GM10248 (cell line): ENCODE measurements at regions of chr22 and their contacts with region 1.

Region 1: GRCh38 chr22:37676736-37677492 is 1.5 kb downstream of the LGALS1 start:
- DNase-seq: peak; percentile 89
- CTCF ChIP-seq: no peak

Region 2: DNA sequence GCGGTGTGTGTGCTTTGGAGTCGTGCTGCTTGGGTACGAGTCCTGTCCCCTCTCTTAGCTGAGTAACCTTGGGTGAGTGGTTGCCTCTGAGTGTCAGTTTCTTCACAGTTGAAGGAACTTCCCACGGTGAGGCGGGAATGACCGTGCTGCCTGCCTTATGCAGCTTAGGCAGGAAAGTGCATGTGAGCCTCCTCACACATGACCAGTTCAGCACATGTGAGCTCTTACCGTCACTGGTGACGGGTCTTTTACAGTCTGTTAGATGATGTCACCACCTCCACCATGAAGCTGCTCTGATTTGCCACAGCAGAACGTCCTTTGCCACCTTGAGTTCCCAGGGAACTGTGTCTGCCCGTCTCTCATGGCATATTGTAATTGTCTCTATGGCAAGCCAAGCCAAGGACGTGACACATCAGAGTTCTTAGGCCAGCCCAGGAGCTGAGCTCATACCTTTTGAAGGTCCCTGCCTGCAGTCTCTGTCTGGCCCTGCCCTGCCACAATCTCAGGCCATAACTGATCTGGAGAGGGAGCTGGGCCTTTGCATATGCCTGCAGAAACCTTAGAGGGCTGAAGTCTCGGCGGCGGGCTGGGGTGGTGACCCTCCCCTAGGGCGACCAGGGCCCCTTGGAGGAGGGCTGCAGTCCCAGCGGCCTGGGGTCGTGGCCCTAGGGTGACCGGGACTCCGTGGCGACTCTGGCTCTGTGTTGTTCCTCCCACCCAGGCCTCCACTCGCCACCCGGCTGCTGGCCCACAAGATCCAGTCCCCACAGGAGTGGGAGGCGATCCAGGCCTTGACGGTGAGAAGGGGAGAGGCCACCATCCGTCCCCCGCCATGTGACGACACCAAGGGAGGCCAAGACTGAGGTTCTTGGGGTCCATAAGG is 60.5 kb before region 1 on chr22:
- CTCF ChIA-PET with region 1: interaction called, 22 read pairs
- POLR2A ChIA-PET with region 1: no interaction called
- DNase-seq: no peak
- CTCF ChIP-seq: no peak

Region 3: DNA sequence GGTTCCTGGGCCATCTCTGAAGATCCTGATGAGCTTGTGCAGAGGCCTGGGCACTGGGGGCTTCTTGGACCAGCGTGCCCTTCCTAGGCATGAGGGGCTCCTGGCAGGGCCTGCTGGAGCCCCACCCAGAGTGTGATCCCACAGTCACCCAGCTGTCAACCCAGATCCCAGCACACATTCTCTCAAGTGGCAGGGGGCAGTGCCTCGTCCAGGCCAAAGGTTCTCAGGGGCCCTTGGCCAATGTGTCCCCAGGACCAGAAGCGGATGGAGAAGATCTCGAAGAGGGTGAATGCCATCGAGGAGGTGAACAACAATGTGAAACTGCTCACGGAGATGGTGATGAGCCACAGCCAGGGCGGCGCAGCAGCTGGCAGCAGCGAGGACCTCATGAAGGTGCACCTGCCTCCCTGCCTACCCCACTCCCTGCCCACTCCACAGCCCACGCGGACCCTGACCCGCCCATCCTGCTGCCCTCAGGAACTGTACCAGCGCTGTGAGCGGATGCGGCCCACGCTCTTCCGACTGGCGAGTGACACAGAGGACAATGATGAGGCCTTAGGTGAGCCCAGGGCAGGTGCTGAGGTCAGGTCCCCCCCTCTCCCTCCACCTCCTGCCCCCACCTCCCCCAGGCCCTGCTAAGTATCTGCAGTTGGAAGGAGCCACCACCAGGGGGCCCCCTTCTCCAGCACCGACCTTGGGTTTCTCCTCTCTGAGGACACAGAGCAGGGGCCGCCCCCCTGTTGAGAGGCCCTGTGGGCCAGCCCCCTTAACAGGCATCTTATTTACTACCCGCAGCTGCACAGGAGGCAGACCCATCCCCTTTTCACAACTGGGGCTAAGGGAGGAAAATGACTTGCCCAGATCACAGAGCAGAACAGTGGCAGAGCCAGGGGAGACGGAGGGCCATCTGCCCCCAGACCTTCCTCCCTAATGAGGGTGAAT is 53.6 kb before region 1 on chr22:
- CTCF ChIA-PET with region 1: interaction called, 22 read pairs
- POLR2A ChIA-PET with region 1: no interaction called
- DNase-seq: peak; percentile 86
- CTCF ChIP-seq: peak; percentile 82

Region 4: DNA sequence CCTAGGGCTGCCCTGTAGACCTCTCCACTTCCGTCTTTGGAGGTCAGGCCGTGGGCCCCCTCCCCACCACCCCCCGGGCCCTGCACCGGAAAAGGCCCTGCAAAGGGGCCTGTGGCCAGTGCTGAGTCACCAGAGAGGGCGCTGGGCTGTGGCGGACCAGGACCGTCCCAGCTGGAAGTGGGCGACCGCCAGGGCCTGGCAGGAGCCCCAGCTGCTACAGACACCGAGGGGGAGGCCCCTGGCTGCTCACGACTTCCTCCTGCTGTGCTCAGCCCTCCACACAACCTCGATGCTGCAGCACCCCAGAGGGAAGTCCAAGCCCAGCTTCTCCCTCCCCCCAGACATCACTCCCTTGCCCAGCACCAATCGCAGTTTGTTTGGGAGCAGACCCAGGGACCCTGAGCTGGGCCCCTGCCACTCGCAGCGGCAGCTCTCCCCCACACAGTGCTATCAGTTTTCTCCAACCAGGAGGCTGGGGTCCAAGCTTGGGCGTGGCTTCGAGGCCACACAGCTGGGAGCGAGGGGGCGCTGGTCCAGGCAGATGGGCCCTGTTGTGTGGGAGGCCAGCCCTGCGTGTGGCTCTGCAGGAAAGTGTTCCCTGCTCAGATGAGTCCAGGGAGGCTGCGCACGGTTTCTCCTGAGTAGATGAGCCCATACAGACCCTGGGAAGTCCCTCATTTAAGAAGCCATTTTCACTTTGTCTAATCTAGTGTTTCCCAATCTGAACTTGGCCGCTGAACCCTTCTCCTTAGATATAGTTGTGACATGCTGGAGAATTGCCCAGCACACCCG is 43.1 kb before region 1 on chr22:
- CTCF ChIA-PET with region 1: interaction called, 298 read pairs
- POLR2A ChIA-PET with region 1: interaction called, 6 read pairs
- DNase-seq: peak; percentile 92
- CTCF ChIP-seq: peak; percentile 44

Region 5: GRCh38 chr22:37658133-37659065 is 18.5 kb before region 1 on chr22 and contains the start of gene PDXP:
- CTCF ChIA-PET with region 1: interaction called, 315 read pairs
- POLR2A ChIA-PET with region 1: interaction called, 39 read pairs
- DNase-seq: peak; percentile 97
- CTCF ChIP-seq: no peak

Region 6: DNA sequence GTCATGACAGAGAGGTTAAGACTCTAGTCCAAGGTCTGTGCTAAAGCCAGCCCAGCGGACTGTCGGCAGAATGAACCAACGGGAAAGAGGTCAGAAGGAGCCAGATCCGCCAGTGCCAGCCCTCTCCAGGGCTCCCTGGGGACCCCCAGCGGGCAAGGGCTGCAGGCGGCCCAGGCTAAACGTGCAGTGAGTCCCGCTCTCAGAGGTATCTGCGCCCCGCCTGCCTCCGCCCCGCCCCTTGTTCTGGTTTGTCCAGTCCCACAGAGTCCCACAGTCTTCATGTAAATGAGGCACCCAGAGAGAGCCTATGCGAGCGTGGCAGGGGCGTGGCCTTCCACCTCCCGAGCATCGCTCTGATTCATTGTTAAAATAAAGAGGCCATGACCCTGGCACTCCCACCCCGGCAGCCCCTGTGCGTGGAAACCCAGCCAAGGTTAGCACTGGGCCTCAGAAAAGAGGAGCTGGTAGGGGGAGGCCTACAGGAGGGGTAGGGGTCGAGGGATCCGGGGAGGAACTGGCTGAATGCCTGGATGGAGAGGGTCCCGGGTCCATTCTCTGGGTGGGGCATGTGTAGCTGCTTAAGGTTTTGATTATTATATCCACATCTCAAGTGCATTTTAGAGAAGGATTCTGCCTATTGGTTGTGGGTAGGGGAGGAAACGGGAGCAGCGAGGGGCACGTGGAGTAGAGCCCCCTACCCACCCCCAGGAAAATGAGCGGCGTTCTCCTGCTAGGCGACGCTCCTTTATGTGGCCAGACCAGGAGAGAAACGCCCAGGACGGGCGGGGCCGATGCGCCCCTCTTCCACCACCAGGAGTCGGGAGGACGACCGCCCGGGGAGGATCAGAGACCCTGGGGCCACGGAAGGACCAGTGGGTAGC is 20.0 kb after region 1 on chr22 and contains the start of gene TRIOBP:
- CTCF ChIA-PET with region 1: interaction called, 27 read pairs
- POLR2A ChIA-PET with region 1: interaction called, 4 read pairs
- DNase-seq: peak; percentile 86
- CTCF ChIP-seq: peak; percentile 38